ENCODE measurements at regions of chr3 and their contacts with region 1.

Region 1: GRCh38 chr3:10551821-10552630 is 46.6 kb upstream of the ATP2B2 start:
- DNase-seq: peak; percentile 95
- ATAC-seq: peak; percentile 75
- H3K4me3 Mint-ChIP-seq: peak overlapping the region; percentile 31
- H3K27ac Mint-ChIP-seq: peak overlapping the region; percentile 83
- H3K4me1 Mint-ChIP-seq: peaks cover 39% of the 10 kb centered on the region
- H3K27me3 Mint-ChIP-seq: peaks cover 8% of the 10 kb centered on the region

Region 2: DNA sequence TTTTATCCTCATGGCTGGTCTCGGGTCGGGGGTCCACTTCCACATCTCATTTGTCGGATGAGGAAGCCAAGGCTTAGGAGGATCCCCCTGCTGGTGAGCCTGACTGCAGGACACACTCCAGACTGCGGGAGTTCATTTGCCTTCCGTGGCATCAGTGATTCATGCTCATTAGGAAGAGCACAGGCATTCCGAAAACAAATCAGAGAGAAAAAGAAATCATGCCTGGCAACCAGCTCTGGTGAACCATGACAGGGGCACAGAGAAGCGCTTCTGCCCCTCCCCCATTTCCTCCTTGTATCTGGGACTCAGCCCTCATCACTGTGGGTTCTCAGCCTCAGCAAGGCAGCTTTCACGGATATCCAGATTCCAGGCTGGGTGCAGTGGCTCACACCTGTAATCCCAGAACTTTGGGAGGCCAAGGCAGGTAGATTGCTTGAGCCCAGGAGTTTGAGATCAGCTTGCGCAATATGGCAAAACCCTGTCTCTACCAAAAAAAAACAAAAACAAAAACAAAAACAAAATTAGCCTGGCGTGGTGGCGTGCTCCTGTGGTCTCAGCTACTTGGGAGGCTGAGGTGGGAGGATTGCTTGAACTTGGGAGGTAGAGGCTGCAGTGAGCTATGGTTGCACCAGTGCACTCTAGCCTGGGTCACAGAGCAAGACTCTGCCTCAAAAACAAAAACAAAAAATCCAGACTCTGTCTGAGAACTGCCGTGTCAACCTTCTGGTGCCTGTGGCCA is 358.9 kb before region 1 on chr3:
- CTCF ChIA-PET with region 1: no interaction called
- POLR2A ChIA-PET with region 1: no interaction called
- intact Hi-C with region 1: loop called in 1 of 2 experiments (anchors 5 kb)
- DNase-seq: peak; percentile 85
- ATAC-seq: peak; percentile 45
- H3K4me3 Mint-ChIP-seq: peak overlapping the region; percentile 41
- H3K27ac Mint-ChIP-seq: peak overlapping the region; percentile 97
- H3K4me1 Mint-ChIP-seq: peaks cover 85% of the 10 kb centered on the region
- H3K27me3 Mint-ChIP-seq: no peaks in the 10 kb centered on the region

Region 3: DNA sequence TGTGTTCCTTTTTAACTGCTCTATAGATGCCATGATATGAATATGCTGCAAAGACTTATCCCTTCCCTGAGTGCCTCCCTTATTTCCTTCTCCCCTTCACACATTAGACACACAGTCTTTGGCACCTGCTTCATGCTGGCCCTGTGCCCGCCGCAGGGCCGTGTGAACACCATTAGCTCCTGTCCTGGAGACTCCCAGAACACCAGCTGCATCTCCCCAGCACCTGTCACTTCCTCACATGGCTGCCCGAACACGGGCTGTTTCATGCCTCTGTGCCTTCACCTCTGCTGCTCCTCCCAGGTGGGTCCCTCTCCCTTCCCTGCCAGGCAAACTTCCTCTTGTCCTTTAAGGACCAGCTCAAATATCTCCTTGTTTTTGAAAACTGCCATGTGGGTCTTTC is 190.7 kb before region 1 on chr3:
- CTCF ChIA-PET with region 1: no interaction called
- POLR2A ChIA-PET with region 1: interaction called, 3 read pairs
- intact Hi-C with region 1: loop called (anchors 1 to 5 kb)
- DNase-seq: no peak
- ATAC-seq: no peak
- H3K4me3 Mint-ChIP-seq: no peak overlapping the region
- H3K27ac Mint-ChIP-seq: no peak overlapping the region
- H3K4me1 Mint-ChIP-seq: peaks cover 36% of the 10 kb centered on the region
- H3K27me3 Mint-ChIP-seq: peaks cover 12% of the 10 kb centered on the region

Region 4: GRCh38 chr3:10366651-10367101 is 185.3 kb before region 1 on chr3:
- CTCF ChIA-PET with region 1: no interaction called
- POLR2A ChIA-PET with region 1: no interaction called
- intact Hi-C with region 1: loop called (anchors 1 to 5 kb)
- DNase-seq: peak; percentile 78
- ATAC-seq: peak; percentile 83
- H3K4me3 Mint-ChIP-seq: peak overlapping the region; percentile 1
- H3K27ac Mint-ChIP-seq: peak overlapping the region; percentile 29
- H3K4me1 Mint-ChIP-seq: peaks cover 48% of the 10 kb centered on the region
- H3K27me3 Mint-ChIP-seq: peaks cover 20% of the 10 kb centered on the region

Region 5: DNA sequence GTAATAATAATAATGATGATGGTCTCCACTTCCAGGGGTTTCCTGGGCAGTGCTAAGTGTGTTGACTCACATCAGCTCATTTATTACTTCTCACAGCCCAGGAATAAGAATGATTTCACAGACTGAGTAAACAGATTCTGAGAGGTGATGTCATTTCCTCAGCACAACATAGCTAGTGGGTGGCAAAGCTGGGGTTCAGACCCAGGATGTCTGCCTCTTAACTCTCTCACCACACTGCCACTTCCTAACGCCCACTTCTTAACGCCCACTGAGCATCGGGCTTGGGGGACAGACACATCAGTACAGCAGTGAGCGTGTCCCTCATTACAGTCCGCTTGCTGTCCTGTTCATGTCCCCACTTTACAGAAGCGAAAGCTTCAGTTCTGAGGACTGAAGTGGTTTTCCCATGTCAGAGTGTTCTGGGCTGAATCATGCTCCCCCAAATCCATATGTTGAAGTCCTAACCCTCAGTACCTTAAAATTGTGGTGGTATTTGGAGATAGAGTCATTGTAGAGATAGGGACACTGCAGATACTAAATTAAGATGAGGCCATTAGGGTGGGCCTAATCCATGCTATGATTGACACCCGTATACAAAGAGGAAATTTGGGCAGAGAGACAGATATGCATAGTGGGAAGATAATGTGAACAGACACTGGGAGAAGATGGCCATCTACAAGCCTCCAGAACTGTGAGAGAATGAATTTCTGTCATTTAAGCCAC is 114.6 kb before region 1 on chr3:
- CTCF ChIA-PET with region 1: no interaction called
- POLR2A ChIA-PET with region 1: no interaction called
- intact Hi-C with region 1: loop called in 1 of 2 experiments (anchors 2 kb)
- DNase-seq: peak; percentile 83
- ATAC-seq: peak; percentile 94
- H3K4me3 Mint-ChIP-seq: no peak overlapping the region
- H3K27ac Mint-ChIP-seq: peak overlapping the region; percentile 58
- H3K4me1 Mint-ChIP-seq: peaks cover 35% of the 10 kb centered on the region
- H3K27me3 Mint-ChIP-seq: no peaks in the 10 kb centered on the region

Region 6: DNA sequence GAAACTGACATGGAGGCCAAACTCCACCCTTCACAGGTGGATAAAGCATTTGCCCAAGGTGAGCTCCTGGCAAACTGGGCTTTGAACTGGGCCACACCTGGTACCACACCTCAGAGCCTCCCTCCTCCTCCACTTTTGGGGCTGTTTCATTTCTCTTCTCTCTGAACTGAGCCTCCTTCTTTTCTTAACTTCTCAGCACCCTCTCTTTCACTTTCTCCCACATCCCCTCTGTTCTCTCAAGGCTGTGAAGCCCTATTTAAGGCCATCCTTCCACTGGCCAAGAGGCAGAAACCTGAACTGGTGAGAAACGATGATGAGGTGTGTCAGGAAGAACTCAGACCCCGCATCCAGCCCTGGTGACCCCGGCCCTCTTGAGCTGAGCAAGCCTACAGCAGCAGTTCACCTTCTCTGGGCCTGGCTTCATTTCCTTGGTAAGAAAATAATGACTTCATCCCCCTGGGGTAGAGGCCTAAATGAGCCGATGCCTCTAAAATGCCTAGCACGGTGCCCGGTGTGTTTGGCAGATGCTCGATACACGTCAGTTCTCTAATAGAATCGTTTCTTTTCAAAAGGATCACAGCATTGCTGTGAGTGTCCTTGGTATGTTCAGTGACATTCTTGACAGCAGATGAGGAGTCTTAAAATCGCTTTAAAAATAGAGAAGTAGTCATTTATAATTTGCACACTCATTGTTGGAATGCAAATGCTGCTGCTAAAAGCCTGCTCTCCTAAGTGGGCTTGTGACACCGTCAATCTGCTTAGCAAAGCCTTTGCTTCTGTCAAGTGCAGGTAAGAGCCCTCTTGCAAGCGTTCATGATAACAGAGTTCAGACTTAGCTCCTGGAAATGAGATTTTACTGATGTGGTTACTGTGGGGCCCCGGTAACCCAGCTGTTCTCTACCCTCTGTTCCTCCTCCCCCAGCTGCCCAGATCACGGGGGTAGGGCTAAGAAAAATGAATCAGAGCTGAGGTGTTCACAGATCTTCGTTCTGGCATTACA is 51.0 kb after region 1 on chr3:
- CTCF ChIA-PET with region 1: no interaction called
- POLR2A ChIA-PET with region 1: no interaction called
- intact Hi-C with region 1: loop called (anchors 1 kb)
- DNase-seq: peak; percentile 83
- ATAC-seq: peak; percentile 96
- H3K4me3 Mint-ChIP-seq: no peak overlapping the region
- H3K27ac Mint-ChIP-seq: peak overlapping the region; percentile 17
- H3K4me1 Mint-ChIP-seq: peaks cover 30% of the 10 kb centered on the region
- H3K27me3 Mint-ChIP-seq: peaks cover 23% of the 10 kb centered on the region

Region 7: GRCh38 chr3:10845839-10846656 is 294.0 kb after region 1 on chr3:
- CTCF ChIA-PET with region 1: no interaction called
- POLR2A ChIA-PET with region 1: no interaction called
- intact Hi-C with region 1: no loop called
- DNase-seq: peak; percentile 27
- ATAC-seq: peak; percentile 48
- H3K4me3 Mint-ChIP-seq: no peak overlapping the region
- H3K27ac Mint-ChIP-seq: no peak overlapping the region
- H3K4me1 Mint-ChIP-seq: peaks cover 6% of the 10 kb centered on the region
- H3K27me3 Mint-ChIP-seq: peaks cover 24% of the 10 kb centered on the region

Region 8: GRCh38 chr3:11626084-11626463 is 1074.0 kb after region 1 on chr3:
- CTCF ChIA-PET with region 1: no interaction called
- POLR2A ChIA-PET with region 1: no interaction called
- intact Hi-C with region 1: loop called in 1 of 2 experiments (anchors 10 kb)
- DNase-seq: peak; percentile 44
- ATAC-seq: peak; percentile 67
- H3K4me3 Mint-ChIP-seq: peak overlapping the region; percentile 26
- H3K27ac Mint-ChIP-seq: peak overlapping the region; percentile 66
- H3K4me1 Mint-ChIP-seq: peaks cover 67% of the 10 kb centered on the region
- H3K27me3 Mint-ChIP-seq: no peaks in the 10 kb centered on the region

Measured in activated CD4-positive, alpha-beta T cell treated with anti-CD3 and anti-CD28 coated beads for 36 hours (primary cell).